ENCODE measurements at regions of chr4 and their contacts with region 1.

Region 1: GRCh38 chr4:121726642-121727268 is 30.0 kb upstream of the ANXA5 start:
- DNase-seq: peak in 4 of 5 donors; percentile 42 to 59 (median 50)
- H3K4me3 ChIP-seq: no peak overlapping the region
- H3K4me3 Mint-ChIP-seq: no peak overlapping the region
- H3K27ac ChIP-seq: no peak overlapping the region
- H3K27ac Mint-ChIP-seq: no peak overlapping the region
- H3K4me1 ChIP-seq: no peaks in the 10 kb centered on the region
- H3K4me1 Mint-ChIP-seq: peaks cover 0 to 2% (median 0%) of the 10 kb centered on the region in 4 donors
- H3K27me3 ChIP-seq: no peaks in the 10 kb centered on the region
- H3K27me3 Mint-ChIP-seq: peaks cover 0 to 2% of the 10 kb centered on the region in 2 donors

Region 2: DNA sequence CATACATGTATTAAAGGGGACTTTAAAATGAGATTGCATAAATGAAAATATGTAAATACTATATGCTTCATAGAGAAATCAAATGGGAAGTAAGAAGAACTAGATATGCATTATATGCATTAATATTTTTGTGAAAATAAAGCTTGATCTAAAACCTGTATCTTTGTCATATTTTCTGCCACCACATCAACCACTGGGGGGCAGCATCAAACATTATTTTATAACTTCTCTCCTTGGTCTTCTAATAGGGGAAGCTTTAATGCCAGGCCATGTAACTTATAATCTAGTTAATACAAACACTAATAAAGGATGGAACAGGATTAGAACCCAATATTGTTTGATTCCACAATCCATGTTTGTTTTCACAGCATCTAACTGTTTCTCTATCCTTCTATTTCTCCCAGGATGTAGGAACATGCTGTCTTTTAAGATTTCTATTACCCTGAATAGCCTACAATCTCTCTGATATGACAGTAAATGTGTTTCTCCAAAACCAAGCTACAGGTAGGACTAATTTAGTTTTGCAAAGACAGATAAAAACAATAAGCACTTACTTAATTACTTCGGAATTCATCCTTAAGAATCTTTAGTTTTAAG is 355.9 kb before region 1 on chr4:
- CTCF ChIA-PET with region 1: interaction called, 5 read pairs
- POLR2A ChIA-PET with region 1: no interaction called
- intact Hi-C with region 1: loop called (anchors 2 kb)
- DNase-seq: peak in 4 of 5 donors; percentile 10 to 22 (median 18)
- H3K4me3 ChIP-seq: no peak overlapping the region
- H3K4me3 Mint-ChIP-seq: no peak overlapping the region
- H3K27ac ChIP-seq: no peak overlapping the region
- H3K27ac Mint-ChIP-seq: no peak overlapping the region
- H3K4me1 ChIP-seq: no peaks in the 10 kb centered on the region
- H3K4me1 Mint-ChIP-seq: no peaks in the 10 kb centered on the region
- H3K27me3 ChIP-seq: no peaks in the 10 kb centered on the region
- H3K27me3 Mint-ChIP-seq: peaks cover 12 to 16% of the 10 kb centered on the region in 2 donors

Region 3: GRCh38 chr4:121462660-121463261 is 264.0 kb before region 1 on chr4:
- CTCF ChIA-PET with region 1: interaction called, 3 read pairs
- POLR2A ChIA-PET with region 1: no interaction called
- intact Hi-C with region 1: loop called (anchors 1 kb)
- DNase-seq: peak; percentile 34 to 42 (median 38)
- H3K4me3 ChIP-seq: no peak overlapping the region
- H3K4me3 Mint-ChIP-seq: no peak overlapping the region
- H3K27ac ChIP-seq: no peak overlapping the region
- H3K27ac Mint-ChIP-seq: no peak overlapping the region
- H3K4me1 ChIP-seq: no peaks in the 10 kb centered on the region
- H3K4me1 Mint-ChIP-seq: peaks cover 0 to 2% (median 0%) of the 10 kb centered on the region in 4 donors
- H3K27me3 ChIP-seq: no peaks in the 10 kb centered on the region
- H3K27me3 Mint-ChIP-seq: peaks cover 21 to 24% of the 10 kb centered on the region in 2 donors

Region 4: DNA sequence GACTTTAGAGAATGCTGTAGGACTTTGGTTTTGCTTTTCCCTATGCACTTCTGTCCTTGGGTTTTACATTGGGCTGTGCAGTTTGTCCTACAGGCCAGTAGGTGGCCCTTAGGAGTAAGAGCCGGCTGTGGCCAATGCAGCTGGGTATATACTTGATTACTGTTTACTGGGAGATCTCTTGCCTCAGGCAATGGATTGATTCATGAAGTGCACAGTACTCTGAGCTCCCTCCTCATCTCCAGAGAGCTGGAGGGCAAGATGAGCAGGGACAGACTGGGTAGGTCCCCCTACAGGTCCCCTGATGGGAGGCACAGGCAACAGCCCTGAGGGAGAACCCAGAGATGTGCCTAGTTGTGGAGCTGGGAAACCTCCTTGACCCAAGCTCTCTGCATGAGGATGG is 242.1 kb before region 1 on chr4:
- CTCF ChIA-PET with region 1: no interaction called
- POLR2A ChIA-PET with region 1: no interaction called
- intact Hi-C with region 1: loop called (anchors 1 kb)
- DNase-seq: peak in 3 of 5 donors; percentile 7 to 13 (median 9)
- H3K4me3 ChIP-seq: no peak overlapping the region
- H3K4me3 Mint-ChIP-seq: no peak overlapping the region
- H3K27ac ChIP-seq: no peak overlapping the region
- H3K27ac Mint-ChIP-seq: no peak overlapping the region
- H3K4me1 ChIP-seq: no peaks in the 10 kb centered on the region
- H3K4me1 Mint-ChIP-seq: no peaks in the 10 kb centered on the region
- H3K27me3 ChIP-seq: no peaks in the 10 kb centered on the region
- H3K27me3 Mint-ChIP-seq: peaks cover 8% of the 10 kb centered on the region in 2 donors

Region 5: GRCh38 chr4:121696581-121697461 is 29.9 kb before region 1 on chr4 and contains the start of gene ANXA5:
- CTCF ChIA-PET with region 1: interaction called, 3 read pairs
- POLR2A ChIA-PET with region 1: no interaction called
- intact Hi-C with region 1: loop called (anchors 1 kb)
- DNase-seq: peak; percentile 62 to 72 (median 70)
- H3K4me3 ChIP-seq: peak within 1 kb of the TSS; percentile 78 to 80
- H3K4me3 Mint-ChIP-seq: peak within 1 kb of the TSS; percentile 97 to 100 (median 99)
- H3K27ac ChIP-seq: peak within 1 kb of the TSS; percentile 55
- H3K27ac Mint-ChIP-seq: peak within 1 kb of the TSS; percentile 89 to 99 (median 96)
- H3K4me1 ChIP-seq: peaks cover 21% of the 10 kb centered on the region
- H3K4me1 Mint-ChIP-seq: peaks cover 29 to 37% (median 31%) of the 10 kb centered on the region in 4 donors
- H3K27me3 ChIP-seq: no peaks in the 10 kb centered on the region
- H3K27me3 Mint-ChIP-seq: peaks cover 0 to 1% of the 10 kb centered on the region in 2 donors
- total RNA-seq, gene ANXA5: 70.7 to 77.0 TPM

Region 6: GRCh38 chr4:121842862-121843261 is 116.1 kb after region 1 on chr4:
- CTCF ChIA-PET with region 1: no interaction called
- POLR2A ChIA-PET with region 1: no interaction called
- intact Hi-C with region 1: no loop called
- DNase-seq: no peak
- H3K4me3 ChIP-seq: no peak overlapping the region
- H3K4me3 Mint-ChIP-seq: no peak overlapping the region
- H3K27ac ChIP-seq: no peak overlapping the region
- H3K27ac Mint-ChIP-seq: no peak overlapping the region
- H3K4me1 ChIP-seq: no peaks in the 10 kb centered on the region
- H3K4me1 Mint-ChIP-seq: no peaks in the 10 kb centered on the region
- H3K27me3 ChIP-seq: no peaks in the 10 kb centered on the region
- H3K27me3 Mint-ChIP-seq: no peaks in the 10 kb centered on the region

Region 7: DNA sequence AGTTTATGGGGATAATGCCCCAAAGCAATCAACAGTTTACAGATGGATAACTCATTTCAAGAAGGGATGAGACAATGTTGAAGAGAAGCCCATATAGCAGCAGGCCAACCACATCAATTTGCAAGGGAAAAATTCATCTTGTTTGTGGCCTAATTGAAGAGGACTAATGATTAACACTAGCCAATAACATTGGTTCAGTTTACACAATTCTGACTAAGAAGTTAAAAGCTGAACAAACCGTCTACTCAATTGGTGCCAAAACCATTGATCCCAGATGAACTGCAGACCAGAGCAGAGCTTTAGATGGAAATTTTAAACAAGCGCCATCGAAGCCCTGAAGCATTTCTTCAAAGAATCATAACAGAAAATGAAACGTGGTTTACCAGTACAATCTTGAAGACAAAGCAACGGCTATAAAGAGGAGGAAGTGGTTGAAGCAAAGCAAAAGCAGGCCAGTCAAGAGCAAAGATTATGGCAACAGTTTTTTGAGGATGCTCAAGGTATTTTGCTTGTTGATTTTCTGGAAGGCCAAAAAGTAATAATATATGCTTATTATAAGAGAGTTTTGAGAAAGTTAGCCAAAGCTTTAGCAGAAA is 404.9 kb after region 1 on chr4:
- CTCF ChIA-PET with region 1: no interaction called
- POLR2A ChIA-PET with region 1: no interaction called
- intact Hi-C with region 1: no loop called
- DNase-seq: peak in 4 of 5 donors; percentile 43 to 62 (median 53)
- H3K4me3 ChIP-seq: no peak overlapping the region
- H3K4me3 Mint-ChIP-seq: peak overlapping the region; percentile 13 to 74 (median 54)
- H3K27ac ChIP-seq: peak overlapping the region; percentile 11
- H3K27ac Mint-ChIP-seq: peak overlapping the region; percentile 28 to 95 (median 89)
- H3K4me1 ChIP-seq: peaks cover 21% of the 10 kb centered on the region
- H3K4me1 Mint-ChIP-seq: peaks cover 16 to 34% (median 22%) of the 10 kb centered on the region in 4 donors
- H3K27me3 ChIP-seq: no peaks in the 10 kb centered on the region
- H3K27me3 Mint-ChIP-seq: no peaks in the 10 kb centered on the region